A549 (cell line): ENCODE measurements at regions of chr5 and their contacts with region 1.

Region 1: GRCh38 chr5:73419465-73420390 is 28.8 kb downstream of the FOXD1 start:
- DNase-seq: no peak
- ATAC-seq: no peak
- H3K4me3 ChIP-seq: no peak overlapping the region
- H3K27ac ChIP-seq: no peak overlapping the region
- H3K4me1 ChIP-seq: no peaks in the 10 kb centered on the region
- CTCF ChIP-seq: no peak
- EP300 ChIP-seq: no peak
- POLR2A ChIP-seq: no peak
- RAD21 ChIP-seq: no peak

Region 2: DNA sequence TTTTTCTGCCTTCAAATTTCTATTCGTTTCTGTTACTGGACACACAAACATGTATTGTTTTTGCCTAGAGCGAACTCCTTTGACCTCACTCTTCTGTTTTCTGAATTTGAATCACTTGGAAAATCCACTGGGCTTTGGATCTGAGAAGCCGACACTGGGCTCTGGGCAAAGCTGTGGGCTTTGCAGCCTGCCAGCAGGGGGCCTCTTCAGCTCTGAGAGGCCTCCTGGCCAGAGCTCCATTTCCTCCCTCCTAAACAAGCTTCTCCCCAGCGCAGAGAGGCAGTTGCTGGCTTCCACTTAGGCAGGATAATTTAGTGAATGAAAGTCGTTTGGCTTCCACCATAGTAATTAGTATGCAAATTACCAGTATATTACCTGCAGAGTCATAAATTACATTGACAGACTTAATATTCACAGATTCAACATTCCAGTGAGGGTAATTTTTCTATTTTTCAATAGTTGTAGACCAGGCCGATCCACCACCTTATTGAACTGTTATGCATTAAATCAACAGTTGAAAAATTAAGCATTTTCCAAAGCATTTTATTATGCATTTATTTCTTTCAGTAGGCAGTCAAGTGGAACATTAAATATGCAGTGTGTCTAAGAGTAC is 808.5 kb before region 1 on chr5:
- CTCF ChIA-PET with region 1: no interaction called
- POLR2A ChIA-PET with region 1: no interaction called
- DNase-seq: peak; percentile 74 to 78
- ATAC-seq: peak; percentile 99 to 100
- H3K4me3 ChIP-seq: no peak overlapping the region
- H3K27ac ChIP-seq: 0 out of 6 replicates have a peak overlapping the region, but pooled peaks of 1 of the 2 experiments have one; percentile 24
- H3K4me1 ChIP-seq: 0 out of 3 replicates have a peak, but pooled peaks cover 9% of the 10 kb centered on the region
- CTCF ChIP-seq: peak; percentile 80
- EP300 ChIP-seq: no peak
- POLR2A ChIP-seq: no peak
- RAD21 ChIP-seq: peak; percentile 81 to 83

Region 3: DNA sequence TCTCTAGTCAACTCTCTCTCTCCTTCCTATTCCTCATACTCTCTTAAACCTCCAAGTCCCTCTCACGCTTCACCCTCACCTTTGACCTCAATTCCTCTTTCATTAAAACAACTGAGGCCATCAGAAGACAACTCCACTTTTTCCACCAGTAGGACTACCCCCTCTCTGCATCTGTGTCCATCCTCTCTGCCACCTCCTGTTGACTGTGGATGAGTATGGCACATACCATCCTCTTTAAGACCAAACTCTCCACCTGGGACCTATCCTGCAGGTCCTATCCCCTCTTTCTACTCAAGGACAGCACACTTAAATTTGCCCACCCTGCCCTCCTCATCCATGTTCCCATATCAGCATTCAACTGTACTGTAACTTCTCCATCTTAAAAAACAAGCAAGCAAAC is 60.3 kb before region 1 on chr5:
- CTCF ChIA-PET with region 1: no interaction called
- POLR2A ChIA-PET with region 1: no interaction called
- DNase-seq: no peak
- ATAC-seq: peak in 1 of 2 experiments; percentile 47; a peak in 1 of 6 replicates
- H3K4me3 ChIP-seq: no peak overlapping the region
- H3K27ac ChIP-seq: no peak overlapping the region
- H3K4me1 ChIP-seq: peaks cover 9% of the 10 kb centered on the region; the same call in 2 of the 3 replicates
- CTCF ChIP-seq: no peak
- EP300 ChIP-seq: no peak
- POLR2A ChIP-seq: no peak
- RAD21 ChIP-seq: no peak

Region 4: GRCh38 chr5:73374520-73375190 is 45.1 kb before region 1 on chr5:
- CTCF ChIA-PET with region 1: no interaction called
- POLR2A ChIA-PET with region 1: no interaction called
- DNase-seq: peak in 1 of 2 experiments; percentile 16
- ATAC-seq: no peak
- H3K4me3 ChIP-seq: no peak overlapping the region
- H3K27ac ChIP-seq: peak overlapping the region in 1 of 2 experiments; percentile 56; a peak in 2 of 6 replicates
- H3K4me1 ChIP-seq: peaks cover 25% of the 10 kb centered on the region
- CTCF ChIP-seq: no peak
- EP300 ChIP-seq: no peak
- POLR2A ChIP-seq: no peak
- RAD21 ChIP-seq: no peak

Region 5: DNA sequence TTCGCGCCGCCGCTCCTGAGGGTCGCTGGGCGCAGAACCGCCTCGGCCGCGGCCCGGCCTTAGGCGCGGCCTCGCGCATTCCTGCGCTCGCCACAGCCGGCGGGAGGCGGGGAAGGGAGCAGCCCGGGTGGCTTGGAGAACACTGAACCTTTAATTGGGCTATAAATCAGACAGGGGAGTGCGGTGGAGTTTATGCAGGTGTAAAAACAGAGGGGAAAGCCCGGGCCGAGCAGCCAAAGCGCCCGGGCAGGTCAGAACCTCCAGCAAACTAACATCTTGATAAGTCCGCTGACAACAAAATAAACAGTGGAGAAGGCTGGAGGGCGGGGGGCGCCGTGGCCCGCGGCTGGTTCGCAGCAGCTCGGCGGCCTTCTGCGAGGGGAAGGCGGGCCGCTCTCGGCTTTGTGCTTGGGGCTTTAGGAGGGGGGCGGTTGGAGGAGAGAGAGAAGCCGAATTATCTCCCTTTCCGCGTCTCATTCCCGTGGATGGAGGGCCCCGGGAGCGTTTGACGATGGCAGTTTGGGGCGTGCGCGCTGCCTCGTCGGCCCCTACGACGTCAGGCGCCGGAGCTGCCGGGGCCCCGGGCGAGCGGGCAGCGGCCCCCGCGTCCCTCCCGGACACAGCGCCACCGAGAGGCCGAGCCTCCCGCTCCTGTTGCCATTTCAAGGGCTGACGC is 17.5 kb after region 1 on chr5:
- CTCF ChIA-PET with region 1: interaction called, 13 read pairs
- POLR2A ChIA-PET with region 1: no interaction called
- DNase-seq: peak; percentile 79 to 88
- ATAC-seq: peak; percentile 93 to 97
- H3K4me3 ChIP-seq: peak overlapping the region; percentile 45
- H3K27ac ChIP-seq: peak overlapping the region; percentile 68 to 86
- H3K4me1 ChIP-seq: peaks cover 11% of the 10 kb centered on the region
- CTCF ChIP-seq: peak; percentile 76
- EP300 ChIP-seq: no peak
- POLR2A ChIP-seq: no peak
- RAD21 ChIP-seq: peak; percentile 47 to 70; a peak in 4 of 5 replicates

Region 6: DNA sequence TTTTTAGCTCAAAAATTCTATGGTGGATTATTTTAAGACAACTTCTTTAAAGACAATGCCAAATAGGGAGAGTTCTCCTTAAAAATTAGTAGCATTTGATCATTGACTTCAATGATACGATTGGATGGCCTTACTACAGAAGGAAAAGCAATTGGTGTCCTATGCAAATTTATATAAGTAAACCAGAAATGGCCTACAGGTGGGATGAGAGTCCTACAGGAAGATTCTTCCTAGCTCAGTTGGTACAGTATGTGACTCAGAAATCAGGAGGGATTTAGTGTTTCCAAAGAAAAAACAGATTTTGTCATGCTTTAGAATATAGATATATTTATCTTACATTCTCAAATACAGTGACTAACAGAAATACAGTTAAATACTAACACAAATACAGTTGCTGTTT is 139.2 kb after region 1 on chr5:
- CTCF ChIA-PET with region 1: no interaction called
- POLR2A ChIA-PET with region 1: no interaction called
- DNase-seq: peak; percentile 47 to 51
- ATAC-seq: peak; percentile 79 to 83; a peak in 4 of 6 replicates
- H3K4me3 ChIP-seq: no peak overlapping the region
- H3K27ac ChIP-seq: no peak overlapping the region
- H3K4me1 ChIP-seq: peaks cover 2% of the 10 kb centered on the region; the same call in 1 of the 3 replicates
- CTCF ChIP-seq: peak; percentile 24; the same call in 2 of the 3 replicates
- EP300 ChIP-seq: no peak
- POLR2A ChIP-seq: no peak
- RAD21 ChIP-seq: peak; percentile 33 to 49; a peak in 3 of 5 replicates